Posterior vena cava (tissue), 2 donors: ENCODE measurements at regions of chrX and their contacts with region 1.

Region 1: DNA sequence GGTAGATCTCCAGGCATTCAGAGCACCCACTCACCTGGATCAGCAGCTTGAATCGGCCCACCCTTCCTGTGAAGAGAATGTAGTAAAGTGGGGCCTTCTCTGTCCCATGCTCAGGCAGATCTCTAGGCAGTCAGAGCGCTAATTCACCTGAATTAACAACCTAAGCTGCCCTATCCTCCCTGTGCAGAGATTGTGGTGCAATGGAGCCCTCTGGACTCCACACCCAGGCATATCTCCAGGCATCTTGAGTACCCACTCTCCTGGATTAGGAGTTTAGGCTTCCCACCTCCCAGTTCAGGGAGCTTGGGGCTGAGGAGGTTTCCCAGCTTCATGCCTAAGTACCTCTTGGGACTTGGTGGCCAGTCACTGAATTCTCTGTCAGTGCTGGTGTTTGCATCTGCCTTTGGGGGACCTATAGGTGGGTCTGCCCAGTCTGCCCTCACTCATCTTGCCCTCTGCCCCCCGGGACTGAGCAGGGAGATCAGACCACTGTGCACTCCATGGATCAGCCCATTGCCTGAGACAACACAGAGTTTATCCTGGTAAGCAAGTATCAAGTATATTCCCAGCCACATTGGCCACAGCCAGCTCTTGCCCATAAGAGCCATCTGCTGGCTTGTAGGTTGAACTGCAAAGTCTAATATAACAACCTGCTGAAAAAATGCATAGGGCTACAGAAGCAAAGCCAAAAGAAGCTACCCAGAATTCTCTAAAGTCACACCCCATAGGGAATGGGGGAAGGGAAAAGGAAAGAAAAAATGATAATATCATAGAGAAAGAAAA is 372.9 kb downstream of the KLHL13 start:
- DNase-seq: no peak

Region 2: DNA sequence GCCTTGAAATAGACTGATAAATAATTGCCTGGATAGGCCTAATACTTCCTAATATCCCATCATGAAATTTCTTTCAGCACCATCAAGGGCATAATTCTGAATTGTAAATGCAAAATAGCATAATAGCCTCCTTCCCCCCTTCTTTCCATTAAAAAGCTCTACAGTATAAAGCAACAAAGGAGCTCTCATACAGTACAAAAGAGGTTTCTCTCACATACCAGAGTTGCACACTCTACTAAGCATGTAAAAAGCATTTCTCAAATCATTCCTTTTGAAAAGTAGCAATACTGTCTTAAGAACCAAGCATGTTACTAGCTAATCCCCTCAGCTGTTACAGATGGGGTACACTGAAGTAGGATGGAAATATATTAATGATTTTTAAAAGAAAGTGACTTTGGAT is 136.1 kb before region 1 on chrX:
- intact Hi-C with region 1: no loop called
- DNase-seq: no peak

Region 3: DNA sequence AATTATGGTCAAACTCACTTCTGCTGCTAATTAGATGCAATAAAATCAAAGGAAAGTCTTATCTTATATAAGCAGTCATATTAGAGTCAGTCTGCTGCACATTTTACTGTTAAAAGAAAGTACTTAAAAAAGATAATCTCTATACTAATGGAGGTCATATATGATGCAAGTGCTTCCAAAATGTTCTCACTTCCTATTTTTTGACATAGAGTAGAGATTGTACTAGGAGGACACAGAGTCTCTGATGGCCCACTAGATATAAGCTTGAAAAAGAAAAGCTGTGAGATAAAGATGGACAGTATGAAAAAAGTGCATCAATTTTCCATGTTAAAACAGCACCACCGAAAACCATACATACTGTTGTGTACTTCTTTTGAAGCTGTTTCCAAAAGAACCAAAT is 176.1 kb after region 1 on chrX:
- intact Hi-C with region 1: loop called in 1 of 2 experiments (anchors 5 kb)
- DNase-seq: no peak